K562 (cell line): ENCODE measurements at regions of chr3 and their contacts with region 1.

Region 1: DNA sequence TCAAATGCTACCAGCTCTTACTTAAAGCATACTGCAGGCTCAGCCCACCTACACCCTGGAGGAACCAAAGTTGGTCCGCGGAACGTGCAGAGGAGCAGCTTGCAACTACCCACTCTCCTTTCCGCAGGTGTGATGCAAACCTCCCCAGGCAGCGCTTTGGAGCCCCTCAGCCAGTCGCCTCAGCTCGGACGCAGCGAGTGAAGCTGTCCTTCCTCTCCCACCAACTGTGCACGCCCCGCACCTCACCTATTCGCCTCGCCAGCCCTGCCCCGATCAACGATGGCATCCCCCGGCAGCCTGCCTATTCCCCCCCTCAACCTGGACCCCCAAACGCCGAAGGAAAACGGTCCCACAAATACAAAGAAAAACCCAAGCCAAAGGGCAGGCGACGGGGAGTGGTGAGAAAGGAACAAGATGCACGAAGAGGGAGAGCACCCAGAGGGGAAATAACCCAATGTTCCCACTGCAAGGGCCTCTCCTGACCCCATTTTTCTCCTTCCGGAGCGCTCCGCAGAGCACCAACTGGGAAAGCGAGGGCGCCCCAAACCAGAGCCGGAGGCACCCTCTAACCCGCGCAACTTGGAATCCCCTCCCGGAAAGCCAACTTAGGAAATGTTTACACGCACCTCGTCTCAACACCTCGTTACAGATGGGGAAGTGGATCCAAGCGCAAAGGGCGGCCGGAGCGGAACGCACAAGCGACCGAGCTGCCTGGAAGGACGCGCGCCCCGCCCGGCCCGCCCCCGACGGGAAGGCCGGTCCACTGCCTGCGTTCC is 665 bp downstream of the GLB1 start:
- DNase-seq: peak; percentile 53 to 73 (median 70)
- ATAC-seq: peak; percentile 67
- H3K4me3 ChIP-seq: peak overlapping the region; percentile 88
- H3K27ac ChIP-seq: peak overlapping the region; percentile 93
- H3K4me1 ChIP-seq: peaks cover 38 to 45% of the 10 kb centered on the region in 2 experiments
- H3K27me3 ChIP-seq: no peaks in the 10 kb centered on the region
- CTCF ChIP-seq: peak in 1 of 3 experiments; percentile 5; a peak in 1 of 6 replicates
- EP300 ChIP-seq: no peak
- POLR2A ChIP-seq: no peak
- RAD21 ChIP-seq: no peak

Region 2: GRCh38 chr3:33054100-33055092 is 41.9 kb before region 1 on chr3:
- CTCF ChIA-PET with region 1: no interaction called
- POLR2A ChIA-PET with region 1: interaction called, 4 read pairs
- in situ Hi-C with region 1: no loop called
- intact Hi-C with region 1: loop called (anchors 1 kb)
- DNase-seq: peak; percentile 79 to 92 (median 86)
- ATAC-seq: peak; percentile 90
- H3K4me3 ChIP-seq: no peak overlapping the region
- H3K27ac ChIP-seq: peak overlapping the region; percentile 75
- H3K4me1 ChIP-seq: peaks cover 22 to 25% of the 10 kb centered on the region in 2 experiments
- H3K27me3 ChIP-seq: no peaks in the 10 kb centered on the region
- CTCF ChIP-seq: no peak
- EP300 ChIP-seq: peak; percentile 99
- POLR2A ChIP-seq: no peak
- RAD21 ChIP-seq: peak in 1 of 2 experiments; percentile 32; a peak in 1 of 4 replicates

Region 3: DNA sequence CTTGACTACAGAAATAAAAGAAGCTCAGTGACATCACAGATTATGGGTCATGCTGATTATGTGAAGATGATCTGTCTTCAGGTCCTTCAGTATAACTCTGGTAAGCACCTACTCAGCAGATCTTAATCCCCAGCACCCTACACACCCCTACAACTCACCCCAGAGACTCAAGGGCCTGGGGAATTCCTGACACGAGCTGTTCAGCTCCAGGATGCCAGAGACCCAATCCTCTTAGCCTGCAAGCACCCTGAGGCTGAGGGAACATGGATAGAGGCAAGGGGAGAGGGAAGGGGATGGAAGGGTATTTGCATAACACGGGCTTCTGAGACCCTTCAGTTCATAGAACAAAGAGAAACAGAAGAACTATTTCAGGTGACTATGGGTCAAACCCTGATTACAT is 12.3 kb before region 1 on chr3:
- CTCF ChIA-PET with region 1: no interaction called
- POLR2A ChIA-PET with region 1: interaction called, 71 read pairs
- in situ Hi-C with region 1: no loop called
- intact Hi-C with region 1: no loop called
- DNase-seq: no peak
- ATAC-seq: 0 out of 3 replicates have a peak, but pooled peaks have one; percentile 10
- H3K4me3 ChIP-seq: no peak overlapping the region
- H3K27ac ChIP-seq: no peak overlapping the region
- H3K4me1 ChIP-seq: peaks cover 3 to 4% of the 10 kb centered on the region in 2 experiments; a peak in 3 of 5 replicates
- H3K27me3 ChIP-seq: no peaks in the 10 kb centered on the region
- CTCF ChIP-seq: no peak
- EP300 ChIP-seq: no peak
- POLR2A ChIP-seq: no peak
- RAD21 ChIP-seq: no peak

Region 4: GRCh38 chr3:33113772-33114621 is 17.7 kb after region 1 on chr3 and contains the start of gene CRTAP:
- CTCF ChIA-PET with region 1: no interaction called
- POLR2A ChIA-PET with region 1: interaction called, 11 read pairs
- in situ Hi-C with region 1: no loop called
- intact Hi-C with region 1: loop called (anchors 1 kb)
- DNase-seq: peak; percentile 94 to 98 (median 97)
- ATAC-seq: peak; percentile 94
- H3K4me3 ChIP-seq: peak within 1 kb of the TSS; percentile 84
- H3K27ac ChIP-seq: peak within 1 kb of the TSS; percentile 93
- H3K4me1 ChIP-seq: peaks cover 4 to 15% of the 10 kb centered on the region in 2 experiments; a peak in 3 of 5 replicates
- H3K27me3 ChIP-seq: no peaks in the 10 kb centered on the region
- CTCF ChIP-seq: no peak
- EP300 ChIP-seq: no peak
- POLR2A ChIP-seq: peak; percentile 81
- RAD21 ChIP-seq: peak; percentile 10 to 16; a peak in 2 of 4 replicates
- polyA plus RNA-seq, gene CRTAP: 10.0 to 10.1 TPM